A549 (cell line): ENCODE measurements at regions of chr9 and their contacts with region 1.

Region 1: DNA sequence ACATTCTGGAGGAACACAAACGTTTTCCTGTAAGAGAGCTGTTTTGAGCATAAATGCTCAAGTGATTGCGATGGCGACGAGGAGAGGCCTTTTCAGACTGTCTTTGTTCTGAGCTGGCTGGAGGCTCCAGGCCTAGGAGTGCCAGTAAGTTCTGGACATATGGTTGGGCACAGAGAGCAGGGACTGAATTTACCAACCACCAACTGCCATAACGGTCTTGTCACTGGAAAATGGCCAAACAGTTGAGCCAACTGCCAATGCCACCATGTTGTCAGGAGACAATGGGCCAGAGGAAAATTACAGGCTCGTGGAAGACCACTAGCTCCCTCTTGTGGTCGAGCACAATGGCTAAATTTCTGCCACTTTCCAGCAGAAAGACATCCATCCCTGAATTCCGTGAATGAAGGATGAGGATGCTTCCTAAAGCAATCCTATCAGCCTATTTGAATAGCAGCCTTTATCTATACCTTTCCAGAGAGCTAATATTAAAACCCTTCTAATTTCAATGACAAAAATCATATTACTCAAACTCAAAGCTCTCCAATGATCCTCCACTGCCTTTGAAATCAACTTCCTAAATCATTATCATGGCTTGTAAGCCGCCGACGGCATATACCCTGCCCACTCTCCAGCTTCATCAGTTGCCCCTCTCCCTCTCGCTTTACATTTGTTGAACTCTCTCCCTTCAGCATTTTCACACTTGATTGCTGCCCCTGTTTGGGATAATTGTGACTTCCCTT is 66.9 kb upstream of the GLIS3 start:
- DNase-seq: peak; percentile 53 to 74
- ATAC-seq: peak; percentile 77 to 86
- H3K4me3 ChIP-seq: no peak overlapping the region
- H3K27ac ChIP-seq: peak overlapping the region in 1 of 2 experiments; percentile 49; a peak in 2 of 6 replicates
- H3K4me1 ChIP-seq: no peaks in the 10 kb centered on the region
- CTCF ChIP-seq: peak; percentile 92
- EP300 ChIP-seq: no peak
- POLR2A ChIP-seq: no peak
- RAD21 ChIP-seq: peak; percentile 94 to 97

Region 2: DNA sequence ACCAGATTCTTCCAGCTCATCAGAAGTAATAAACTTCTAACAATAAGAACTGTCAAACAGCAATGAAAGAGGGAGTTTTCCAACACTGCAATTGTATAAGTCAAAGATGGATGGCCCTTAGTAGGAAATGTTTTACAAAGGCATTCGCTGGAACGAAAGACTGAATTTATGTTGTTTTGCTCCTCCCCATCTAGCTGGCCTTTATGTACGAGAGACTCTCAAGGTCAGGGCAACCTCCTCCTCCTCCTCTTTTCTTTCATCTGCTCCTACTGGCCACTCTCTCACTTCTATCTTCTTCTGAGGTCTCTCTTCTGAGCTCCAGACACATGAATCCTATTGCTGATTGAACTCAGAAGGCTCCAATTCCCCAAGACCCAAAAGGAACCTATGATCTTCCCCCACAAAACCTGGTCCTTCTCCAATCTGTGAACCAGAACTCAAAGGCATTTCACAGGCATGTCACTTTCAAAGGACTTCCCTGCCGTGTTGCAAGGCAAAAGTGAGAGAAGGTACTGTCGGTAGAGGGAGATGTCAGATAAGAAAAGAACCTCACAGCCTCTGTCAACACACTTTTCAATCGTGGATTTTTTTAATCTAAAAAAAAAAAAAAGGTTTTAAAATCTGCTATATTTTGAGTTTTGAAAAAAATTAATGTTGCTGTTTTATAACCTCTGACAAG is 1494.4 kb before region 1 on chr9:
- CTCF ChIA-PET with region 1: interaction called, 11 read pairs
- POLR2A ChIA-PET with region 1: no interaction called
- DNase-seq: peak in 1 of 2 experiments; percentile 45
- ATAC-seq: peak; percentile 73 to 81; a peak in 5 of 6 replicates
- H3K4me3 ChIP-seq: no peak overlapping the region
- H3K27ac ChIP-seq: no peak overlapping the region
- H3K4me1 ChIP-seq: no peaks in the 10 kb centered on the region
- CTCF ChIP-seq: peak; percentile 60
- EP300 ChIP-seq: no peak
- POLR2A ChIP-seq: no peak
- RAD21 ChIP-seq: peak; percentile 60 to 69

Region 3: DNA sequence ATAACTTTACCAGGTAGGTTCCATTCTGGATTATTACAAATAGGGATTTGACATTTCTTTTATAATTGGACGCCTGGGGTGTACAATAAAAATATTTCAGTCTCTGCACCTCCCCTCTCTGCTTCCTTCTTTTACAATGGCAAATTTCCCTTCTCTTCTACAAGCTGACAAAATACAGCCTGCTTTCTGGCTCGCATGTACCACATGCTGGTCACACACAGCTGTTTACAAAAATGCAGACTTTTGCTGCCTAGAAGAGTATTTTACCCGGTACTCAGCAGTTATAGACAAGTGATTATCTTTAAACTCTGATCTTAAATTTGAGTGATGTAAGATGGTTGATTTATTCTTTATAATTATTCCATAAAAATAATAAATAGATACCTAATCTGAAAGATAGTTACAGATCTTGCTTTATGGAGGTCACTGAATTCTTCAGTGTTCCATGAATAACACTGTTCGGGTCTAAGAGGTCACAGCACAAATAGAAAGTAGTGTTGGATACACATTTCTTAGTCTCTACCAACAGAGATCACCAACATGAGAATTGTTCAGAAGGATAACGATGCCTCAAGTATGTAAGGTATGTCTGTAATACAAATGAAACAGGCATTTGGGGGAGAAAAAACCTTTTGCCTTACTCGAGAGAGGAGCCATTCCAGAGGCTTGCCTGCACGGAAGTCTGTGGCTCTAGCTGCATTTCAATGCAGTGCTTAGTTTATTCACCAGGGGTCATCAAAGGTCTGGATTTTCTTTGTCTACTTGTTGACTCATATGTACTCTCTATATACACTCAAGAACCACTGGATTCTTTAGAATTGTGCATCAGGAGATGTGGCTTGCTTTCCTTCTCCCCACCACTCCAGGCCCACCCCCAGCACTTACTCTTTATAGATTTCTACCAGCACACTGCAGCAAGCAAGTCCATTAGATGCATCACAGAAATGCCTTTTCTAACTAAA is 634.4 kb before region 1 on chr9:
- CTCF ChIA-PET with region 1: interaction called, 71 read pairs
- POLR2A ChIA-PET with region 1: no interaction called
- DNase-seq: peak; percentile 78 to 83
- ATAC-seq: peak; percentile 100
- H3K4me3 ChIP-seq: no peak overlapping the region
- H3K27ac ChIP-seq: peak overlapping the region; percentile 52 to 69
- H3K4me1 ChIP-seq: peaks cover 8% of the 10 kb centered on the region
- CTCF ChIP-seq: peak; percentile 90
- EP300 ChIP-seq: no peak
- POLR2A ChIP-seq: no peak
- RAD21 ChIP-seq: peak; percentile 97 to 98

Region 4: GRCh38 chr9:4262735-4263141 is 104.0 kb before region 1 on chr9:
- CTCF ChIA-PET with region 1: no interaction called
- POLR2A ChIA-PET with region 1: no interaction called
- DNase-seq: peak; percentile 51 to 66
- ATAC-seq: peak; percentile 71 to 81
- H3K4me3 ChIP-seq: no peak overlapping the region
- H3K27ac ChIP-seq: peak overlapping the region; percentile 23 to 67; a peak in 4 of 6 replicates
- H3K4me1 ChIP-seq: peaks cover 57% of the 10 kb centered on the region
- CTCF ChIP-seq: no peak
- EP300 ChIP-seq: no peak
- POLR2A ChIP-seq: no peak
- RAD21 ChIP-seq: no peak; a peak in 1 of 5 replicates

Region 5: DNA sequence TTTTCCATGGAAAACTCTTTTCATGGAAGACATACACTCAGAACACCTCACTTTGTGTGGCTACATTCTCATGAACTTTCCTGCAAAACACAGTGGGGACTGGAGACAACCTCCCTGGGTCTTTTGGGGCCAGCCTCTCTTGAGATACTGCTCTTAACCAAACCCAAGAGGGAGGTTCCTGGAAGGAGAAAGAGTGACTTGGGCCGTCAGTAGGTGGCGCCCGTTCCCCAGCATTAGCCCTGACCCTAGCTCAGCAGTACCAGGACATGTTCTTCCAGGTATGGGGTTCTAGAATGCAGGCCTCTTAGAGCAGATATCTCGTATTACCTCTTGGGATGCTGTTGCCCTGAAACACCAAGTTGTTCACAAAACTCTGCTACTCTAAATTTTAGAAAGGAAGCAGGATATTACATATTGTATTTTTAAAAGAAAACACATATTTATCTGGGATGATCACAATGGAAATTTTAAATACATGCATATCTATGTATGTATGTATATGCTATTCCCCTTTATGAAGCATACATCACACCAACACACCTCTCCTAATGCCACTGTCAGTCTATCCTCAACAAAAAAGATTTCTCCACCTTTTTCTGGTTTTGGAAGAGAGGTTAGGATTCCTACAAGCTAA is 51.1 kb before region 1 on chr9:
- CTCF ChIA-PET with region 1: interaction called, 95 read pairs
- POLR2A ChIA-PET with region 1: no interaction called
- DNase-seq: peak; percentile 73 to 84
- ATAC-seq: peak; percentile 100
- H3K4me3 ChIP-seq: no peak overlapping the region
- H3K27ac ChIP-seq: peak overlapping the region in 1 of 2 experiments; percentile 4; a peak in 2 of 6 replicates
- H3K4me1 ChIP-seq: no peaks in the 10 kb centered on the region
- CTCF ChIP-seq: peak; percentile 94
- EP300 ChIP-seq: no peak
- POLR2A ChIP-seq: no peak
- RAD21 ChIP-seq: peak; percentile 95 to 97

Region 6: DNA sequence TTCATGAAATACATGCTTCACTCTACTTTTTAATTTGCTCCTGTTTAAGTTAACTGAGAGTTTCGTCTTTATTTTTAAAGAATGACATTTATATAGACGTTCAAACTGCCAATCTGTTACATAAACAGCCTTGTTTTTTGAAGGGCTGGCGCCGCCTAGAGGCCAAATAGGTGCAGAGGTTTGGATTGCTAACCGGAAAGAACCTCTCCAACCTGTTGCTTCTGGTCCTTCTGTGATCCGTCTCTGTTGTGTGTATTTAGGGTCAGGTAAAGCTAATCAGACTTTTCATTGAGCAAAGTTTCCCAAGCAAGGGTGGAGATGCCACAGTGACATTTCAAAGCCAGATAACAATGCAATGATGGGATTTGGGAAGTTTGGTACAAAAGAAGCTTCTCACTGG is 27.4 kb before region 1 on chr9:
- CTCF ChIA-PET with region 1: interaction called, 36 read pairs
- POLR2A ChIA-PET with region 1: no interaction called
- DNase-seq: peak; percentile 84 to 88
- ATAC-seq: peak; percentile 82 to 87
- H3K4me3 ChIP-seq: 0 out of 3 replicates have a peak overlapping the region, but pooled peaks have one; percentile 20
- H3K27ac ChIP-seq: peak overlapping the region; percentile 62 to 77
- H3K4me1 ChIP-seq: peaks cover 7% of the 10 kb centered on the region
- CTCF ChIP-seq: peak; percentile 97
- EP300 ChIP-seq: no peak
- POLR2A ChIP-seq: no peak
- RAD21 ChIP-seq: peak; percentile 92

Region 7: DNA sequence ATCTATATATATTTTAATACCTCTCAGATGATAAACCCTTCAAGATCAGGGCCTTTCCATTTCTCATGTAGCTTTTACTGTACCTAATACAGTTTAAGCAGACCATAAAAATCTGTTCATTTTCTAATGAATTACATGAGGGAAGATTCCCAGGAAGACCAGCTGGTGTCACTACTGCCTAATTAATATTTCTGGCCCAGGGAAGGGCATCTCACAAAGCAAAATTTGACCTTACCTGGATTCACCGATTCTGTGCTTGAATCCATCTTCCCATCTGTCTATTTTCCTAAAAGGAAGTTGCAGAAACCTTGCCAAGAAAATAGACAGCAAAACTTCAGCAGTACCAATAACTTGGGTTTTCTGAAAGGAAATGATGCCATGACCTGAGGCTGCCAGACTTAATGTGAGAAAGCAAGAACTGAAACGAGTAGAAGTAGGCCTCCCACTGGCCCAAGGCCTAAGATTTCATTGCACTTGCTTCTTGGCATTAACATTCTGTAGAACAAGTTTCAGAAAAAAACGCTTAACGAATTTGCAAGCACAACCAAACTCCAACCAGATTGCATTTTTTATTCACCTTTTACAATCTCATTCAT is 16.1 kb after region 1 on chr9:
- CTCF ChIA-PET with region 1: interaction called, 15 read pairs
- POLR2A ChIA-PET with region 1: no interaction called
- DNase-seq: peak in 1 of 2 experiments; percentile 28
- ATAC-seq: peak in 1 of 2 experiments; percentile 72; a peak in 3 of 6 replicates
- H3K4me3 ChIP-seq: no peak overlapping the region
- H3K27ac ChIP-seq: no peak overlapping the region
- H3K4me1 ChIP-seq: no peaks in the 10 kb centered on the region
- CTCF ChIP-seq: peak; percentile 70
- EP300 ChIP-seq: no peak
- POLR2A ChIP-seq: no peak
- RAD21 ChIP-seq: peak; percentile 82 to 84